ENCODE measurements at regions of chr12 and their contacts with region 1.

Region 1: DNA sequence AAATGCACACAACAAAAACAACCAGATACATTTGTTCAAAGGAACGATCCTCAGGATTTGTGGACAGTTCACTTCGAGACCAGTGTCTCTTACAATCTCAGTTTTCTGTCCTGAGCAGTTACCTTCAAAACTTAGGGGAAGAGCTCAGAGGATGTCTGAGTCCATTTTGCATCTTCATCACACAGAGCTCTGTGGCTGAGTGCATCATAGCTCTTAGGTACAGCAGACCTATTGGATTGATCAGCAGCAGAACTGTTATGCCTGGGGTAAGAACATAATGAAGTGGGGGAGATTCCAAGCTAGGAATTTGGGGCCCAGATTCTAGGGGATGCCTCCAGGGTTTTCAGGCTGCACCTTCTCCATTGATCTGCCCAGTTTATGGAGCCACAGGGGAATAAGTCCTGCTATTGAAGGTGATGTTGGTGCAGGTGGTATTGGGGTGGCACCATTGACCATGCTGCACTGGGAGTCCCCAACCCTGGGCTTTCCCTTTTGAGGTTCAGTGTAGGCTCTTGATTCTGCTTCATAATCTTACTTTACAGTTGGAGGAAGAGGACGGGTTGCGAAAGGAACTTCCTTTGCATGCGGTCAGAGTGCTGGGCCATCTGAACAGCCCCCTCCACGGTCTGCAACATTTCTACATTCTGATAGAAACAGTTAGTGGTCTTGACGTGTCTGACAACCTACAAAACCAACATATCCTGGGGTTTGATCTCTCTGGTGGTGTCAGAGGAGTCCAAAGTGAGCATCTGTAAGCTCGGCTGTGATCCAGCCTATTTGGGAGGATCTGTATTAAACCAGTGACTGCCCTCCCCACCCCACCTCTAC is 112.8 kb downstream of the CHST11 start:
- DNase-seq: peak; percentile 58
- CTCF ChIP-seq: no peak

Region 2: DNA sequence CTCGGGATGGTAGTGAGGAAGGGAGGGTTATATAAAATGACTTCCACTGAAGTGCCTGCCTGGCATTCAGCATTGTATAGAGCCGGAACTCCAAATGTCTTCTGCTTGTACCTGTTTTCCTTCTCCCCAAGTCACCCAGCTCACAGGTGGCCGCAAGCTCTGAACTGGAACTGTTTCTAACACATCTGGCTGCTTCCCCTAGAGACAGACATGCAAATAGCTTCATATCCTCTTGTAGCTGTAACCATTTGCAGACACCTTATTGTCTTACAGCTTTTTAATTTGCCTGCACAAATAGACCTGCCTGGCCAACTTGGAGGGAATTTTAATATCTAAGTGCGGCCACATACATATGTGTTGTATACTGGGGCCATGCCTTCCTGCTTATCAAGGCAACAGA is 13.2 kb after region 1 on chr12:
- CTCF ChIA-PET with region 1: interaction called, 35 read pairs
- POLR2A ChIA-PET with region 1: interaction called, 3 read pairs
- DNase-seq: peak; percentile 79
- CTCF ChIP-seq: no peak

Region 3: GRCh38 chr12:104858611-104859543 is 289.3 kb after region 1 on chr12:
- CTCF ChIA-PET with region 1: no interaction called
- POLR2A ChIA-PET with region 1: no interaction called
- DNase-seq: no peak
- CTCF ChIP-seq: no peak